ENCODE measurements at regions of chr1 and their contacts with region 1.

Region 1: GRCh38 chr1:211258756-211259637 is at the start of gene RCOR3:
- DNase-seq: peak; percentile 91
- H3K4me3 Mint-ChIP-seq: peak within 1 kb of the TSS; percentile 88
- H3K27ac Mint-ChIP-seq: peak within 1 kb of the TSS; percentile 92
- H3K4me1 Mint-ChIP-seq: peaks cover 19% of the 10 kb centered on the region
- H3K27me3 Mint-ChIP-seq: no peaks in the 10 kb centered on the region
- total RNA-seq, gene RCOR3: 42.3 and 45.0 TPM in 2 replicates

Region 2: GRCh38 chr1:210992837-210993236 is 266.2 kb before region 1 on chr1:
- intact Hi-C with region 1: no loop called
- DNase-seq: no peak
- H3K4me3 Mint-ChIP-seq: no peak overlapping the region
- H3K27ac Mint-ChIP-seq: no peak overlapping the region
- H3K4me1 Mint-ChIP-seq: no peaks in the 10 kb centered on the region
- H3K27me3 Mint-ChIP-seq: no peaks in the 10 kb centered on the region

Region 3: DNA sequence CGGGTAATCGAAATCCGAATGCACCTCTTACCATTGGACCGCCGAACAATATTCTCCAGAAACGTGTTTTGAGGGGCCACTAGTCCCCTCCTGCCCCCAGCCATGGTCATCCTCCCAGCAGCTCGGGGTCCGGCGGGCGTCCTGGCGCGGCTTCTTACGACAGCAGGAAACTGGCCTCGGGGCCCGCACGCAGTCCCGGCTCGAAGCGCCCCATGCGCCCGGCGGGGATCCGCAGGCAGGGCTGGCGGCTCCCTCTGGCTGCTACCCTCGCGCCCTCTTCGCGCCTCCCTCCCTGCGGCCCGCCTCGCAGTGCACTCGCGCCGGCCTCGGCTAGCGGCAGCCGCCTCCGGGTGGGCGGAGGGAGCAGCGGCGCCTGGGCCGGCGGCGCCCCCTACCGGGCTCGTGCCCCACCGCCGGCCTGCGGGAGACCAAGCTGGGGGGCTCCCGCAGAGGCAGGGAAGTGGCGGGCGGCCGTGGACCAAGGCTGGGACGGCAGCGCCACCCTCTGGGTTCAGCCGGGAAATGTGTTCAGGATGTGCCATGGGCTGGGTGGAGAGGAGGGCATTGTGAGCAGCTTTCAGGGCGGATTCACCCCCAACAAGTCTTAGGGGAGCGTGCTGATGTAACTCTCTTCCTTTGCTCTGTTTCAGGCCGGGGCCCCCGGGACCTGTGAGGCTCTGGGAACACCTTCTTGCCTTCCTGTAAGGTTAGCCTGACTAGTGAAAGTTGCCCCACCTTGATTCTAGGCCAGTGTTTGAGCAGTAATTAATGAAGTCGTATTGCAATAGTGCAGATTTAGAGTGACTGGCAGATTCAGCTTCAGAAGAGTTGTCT is 124.9 kb before region 1 on chr1 and contains the start of gene KCNH1:
- intact Hi-C with region 1: loop called (anchors 5 kb)
- DNase-seq: peak; percentile 65
- H3K4me3 Mint-ChIP-seq: peak within 1 kb of the TSS; percentile 35
- H3K27ac Mint-ChIP-seq: no peak within 1 kb of the TSS
- H3K4me1 Mint-ChIP-seq: peaks cover 5% of the 10 kb centered on the region
- H3K27me3 Mint-ChIP-seq: peaks cover 79% of the 10 kb centered on the region
- total RNA-seq, gene KCNH1: not detected in 2 replicates

Region 4: DNA sequence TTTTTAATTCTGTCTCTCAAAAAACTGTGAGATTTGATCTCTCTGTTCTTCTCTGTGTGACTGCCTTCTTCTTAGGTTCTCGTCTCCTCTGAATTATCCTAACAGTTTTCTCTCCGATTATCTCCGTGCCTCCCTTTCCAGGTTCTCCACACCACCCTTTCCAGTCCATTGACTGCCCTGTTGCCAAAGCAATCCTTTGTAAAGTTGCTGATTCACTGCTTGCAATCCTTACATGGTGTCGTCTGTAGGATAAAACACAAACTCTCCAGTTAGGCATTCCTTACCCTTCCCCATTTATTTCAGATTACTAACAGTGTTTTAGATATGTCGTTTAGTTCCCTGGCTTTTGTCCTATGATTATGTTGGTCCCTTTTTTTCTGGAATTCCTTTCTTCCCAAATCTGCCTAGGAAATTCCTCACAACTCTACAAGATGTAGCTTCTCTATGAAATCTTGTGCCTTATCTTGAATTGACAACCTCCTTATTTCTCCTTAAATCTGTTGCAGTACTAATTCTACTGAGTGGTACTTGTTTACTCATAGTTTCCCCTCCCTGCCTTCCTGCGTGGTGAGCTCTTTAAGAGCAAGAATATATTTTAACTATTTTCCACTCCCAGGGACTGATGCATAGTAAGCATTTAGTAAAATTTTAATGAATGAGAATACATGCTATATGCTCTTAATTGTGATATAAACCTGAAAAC is 22.5 kb after region 1 on chr1:
- intact Hi-C with region 1: loop called (anchors 1 kb)
- DNase-seq: no peak
- H3K4me3 Mint-ChIP-seq: no peak overlapping the region
- H3K27ac Mint-ChIP-seq: no peak overlapping the region
- H3K4me1 Mint-ChIP-seq: peaks cover 2% of the 10 kb centered on the region
- H3K27me3 Mint-ChIP-seq: no peaks in the 10 kb centered on the region

Region 5: GRCh38 chr1:211514030-211514754 is 255.2 kb after region 1 on chr1:
- intact Hi-C with region 1: loop called (anchors 1 kb)
- DNase-seq: peak; percentile 65
- H3K4me3 Mint-ChIP-seq: peak overlapping the region; percentile 65
- H3K27ac Mint-ChIP-seq: peak overlapping the region; percentile 44
- H3K4me1 Mint-ChIP-seq: peaks cover 30% of the 10 kb centered on the region
- H3K27me3 Mint-ChIP-seq: peaks cover 7% of the 10 kb centered on the region